IMR-90 (cell line): ENCODE measurements at regions of chr17 and their contacts with region 1.

Region 1: DNA sequence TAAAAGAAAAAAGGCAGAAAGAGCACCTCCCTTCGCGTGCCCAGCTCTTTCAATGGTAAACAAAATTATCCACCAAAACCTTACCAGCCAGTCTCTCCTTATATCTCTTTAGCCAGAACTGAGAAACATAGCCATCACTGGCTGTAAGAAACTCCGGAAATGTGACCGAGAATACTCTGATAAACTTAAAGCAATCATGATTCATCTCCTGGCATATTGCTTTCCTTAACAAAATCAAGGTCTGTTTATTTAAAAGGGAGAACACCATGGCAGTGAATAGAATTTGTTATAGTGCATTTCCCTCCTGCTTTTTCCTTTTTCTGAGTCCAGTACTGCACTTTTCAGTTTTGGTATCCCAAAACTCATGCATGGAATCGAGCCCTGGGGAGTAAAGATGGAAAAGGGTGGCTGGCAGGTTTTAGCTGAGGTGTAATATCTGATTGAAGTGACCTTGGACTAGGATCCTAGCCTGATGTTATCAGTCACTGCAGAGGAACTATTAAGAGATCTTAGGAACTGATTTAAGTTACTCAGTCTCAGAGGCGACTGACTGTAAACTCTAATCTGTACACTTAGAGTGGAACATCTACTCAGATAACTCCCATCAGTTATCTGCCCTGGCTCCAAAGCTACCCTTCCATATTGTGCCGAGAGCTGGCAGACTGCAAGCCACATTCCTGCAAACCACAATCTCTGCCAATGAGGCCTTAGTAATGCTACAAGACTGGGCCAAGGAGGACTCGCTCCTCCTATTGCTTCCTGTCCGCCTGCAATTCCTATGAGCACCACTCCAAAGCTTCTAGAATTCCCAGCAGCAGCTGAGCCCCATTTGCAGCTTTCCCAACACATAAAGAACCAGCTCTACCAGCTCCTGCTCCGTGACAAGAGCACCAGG is 7.4 kb upstream of the COX10 start:
- DNase-seq: peak; percentile 84
- ATAC-seq: peak; percentile 89
- H3K4me3 ChIP-seq: no peak overlapping the region; the same call in 1 of the 2 replicates
- H3K27ac ChIP-seq: peak overlapping the region; percentile 87
- H3K4me1 ChIP-seq: peaks cover 9% of the 10 kb centered on the region
- H3K27me3 ChIP-seq: no peaks in the 10 kb centered on the region
- CTCF ChIP-seq: 0 out of 2 replicates have a peak, but pooled peaks have one; percentile 9
- POLR2A ChIP-seq: no peak
- RAD21 ChIP-seq: no peak

Region 2: GRCh38 chr17:13337864-13338371 is 724.0 kb before region 1 on chr17:
- CTCF ChIA-PET with region 1: interaction called, 3 read pairs
- POLR2A ChIA-PET with region 1: no interaction called
- dilution Hi-C with region 1: no loop called
- in situ Hi-C with region 1: no loop called
- intact Hi-C with region 1: loop called (anchors 5 kb)
- DNase-seq: peak; percentile 78
- ATAC-seq: peak; percentile 84
- H3K4me3 ChIP-seq: peak overlapping the region; percentile 54
- H3K27ac ChIP-seq: no peak overlapping the region
- H3K4me1 ChIP-seq: peaks cover 5% of the 10 kb centered on the region
- H3K27me3 ChIP-seq: no peaks in the 10 kb centered on the region
- CTCF ChIP-seq: peak; percentile 92
- POLR2A ChIP-seq: peak; percentile 45; the same call in 1 of the 2 replicates
- RAD21 ChIP-seq: peak; percentile 93

Region 3: DNA sequence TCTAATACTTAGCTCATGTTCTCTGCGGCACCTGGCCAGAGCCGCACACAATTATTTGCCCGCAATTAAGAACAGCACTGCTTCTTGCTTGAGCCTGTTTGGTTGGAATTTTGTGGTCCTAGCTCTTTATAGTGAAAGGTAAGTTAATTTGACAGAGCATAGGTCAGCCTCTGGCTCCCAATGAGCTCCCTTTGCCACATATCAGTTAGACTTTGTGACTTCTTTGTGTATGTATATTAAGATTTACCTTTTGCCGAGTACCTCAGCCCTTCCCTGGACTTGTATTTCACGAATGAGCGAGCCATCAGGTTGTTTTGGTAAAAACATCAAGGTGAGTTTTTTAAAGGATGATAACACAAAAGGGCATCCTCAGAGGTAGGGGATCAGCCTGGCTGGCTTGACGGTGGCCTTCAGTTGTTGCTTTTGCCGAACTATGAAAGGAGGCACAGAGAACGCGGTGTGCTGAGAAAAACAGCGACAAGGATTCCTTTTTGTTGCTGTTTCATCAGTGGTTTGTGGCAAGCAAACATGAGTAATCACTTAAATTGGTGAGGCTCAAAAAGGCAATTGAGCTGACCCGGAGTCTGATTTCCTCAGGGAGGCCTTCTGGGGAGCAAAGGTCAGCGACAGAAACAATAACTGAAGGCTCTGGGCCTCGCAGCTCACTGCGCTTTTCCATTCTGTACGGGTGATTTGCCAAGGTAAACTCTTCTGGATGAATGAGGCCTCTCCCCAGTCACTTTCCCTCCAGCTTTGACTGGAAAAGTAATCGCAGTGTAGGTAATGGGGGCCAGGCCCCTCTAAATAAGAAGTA is 623.7 kb before region 1 on chr17:
- CTCF ChIA-PET with region 1: no interaction called
- POLR2A ChIA-PET with region 1: no interaction called
- dilution Hi-C with region 1: no loop called
- in situ Hi-C with region 1: no loop called
- intact Hi-C with region 1: no loop called
- DNase-seq: no peak
- ATAC-seq: no peak
- H3K4me3 ChIP-seq: no peak overlapping the region
- H3K27ac ChIP-seq: no peak overlapping the region
- H3K4me1 ChIP-seq: no peaks in the 10 kb centered on the region
- H3K27me3 ChIP-seq: no peaks in the 10 kb centered on the region
- CTCF ChIP-seq: no peak
- POLR2A ChIP-seq: no peak
- RAD21 ChIP-seq: no peak

Region 4: DNA sequence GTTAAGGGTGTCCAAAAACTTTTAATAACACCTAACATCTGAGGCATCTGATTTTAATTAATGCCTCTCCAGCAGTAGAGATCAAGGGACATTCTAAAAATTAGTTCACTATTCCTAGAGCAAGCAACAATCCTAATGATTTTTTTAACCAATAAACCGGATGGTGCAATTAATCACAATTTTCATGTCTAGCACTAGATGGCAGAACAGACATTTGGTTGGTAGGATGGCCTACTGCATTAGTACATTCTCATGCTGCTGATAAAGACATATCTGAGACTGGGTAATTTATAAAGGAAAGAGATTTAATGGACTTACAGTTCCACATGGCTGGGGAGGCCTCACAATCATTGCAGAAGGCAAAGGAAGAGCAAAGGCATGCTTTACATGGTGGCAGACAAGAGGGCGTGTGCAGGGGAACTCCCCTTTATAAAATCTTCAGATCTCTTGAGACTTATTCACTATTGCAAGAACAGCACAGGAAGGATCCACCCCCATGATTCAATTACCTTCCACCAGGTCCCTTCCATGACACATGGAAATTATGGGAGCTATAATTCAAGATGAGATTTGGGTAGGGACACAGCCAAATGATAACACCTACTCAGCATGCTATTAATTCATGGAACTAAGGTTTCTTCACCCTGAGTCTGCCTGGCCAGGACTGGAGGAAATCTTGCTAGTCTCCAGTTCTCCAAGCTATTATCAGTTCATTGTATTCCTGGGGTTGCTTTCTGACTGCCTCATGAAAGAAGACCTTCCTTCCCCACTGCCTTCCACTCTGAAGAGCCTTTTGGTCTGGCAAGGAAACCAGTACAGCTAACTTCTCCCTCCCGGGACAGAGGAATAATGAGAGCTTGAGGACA is 485.0 kb before region 1 on chr17:
- CTCF ChIA-PET with region 1: no interaction called
- POLR2A ChIA-PET with region 1: interaction called, 11 read pairs
- dilution Hi-C with region 1: no loop called
- in situ Hi-C with region 1: no loop called
- intact Hi-C with region 1: no loop called
- DNase-seq: no peak
- ATAC-seq: no peak
- H3K4me3 ChIP-seq: no peak overlapping the region
- H3K27ac ChIP-seq: no peak overlapping the region
- H3K4me1 ChIP-seq: peaks cover 8% of the 10 kb centered on the region
- H3K27me3 ChIP-seq: no peaks in the 10 kb centered on the region
- CTCF ChIP-seq: peak; percentile 16; the same call in 1 of the 2 replicates
- POLR2A ChIP-seq: no peak
- RAD21 ChIP-seq: peak; percentile 31

Region 5: DNA sequence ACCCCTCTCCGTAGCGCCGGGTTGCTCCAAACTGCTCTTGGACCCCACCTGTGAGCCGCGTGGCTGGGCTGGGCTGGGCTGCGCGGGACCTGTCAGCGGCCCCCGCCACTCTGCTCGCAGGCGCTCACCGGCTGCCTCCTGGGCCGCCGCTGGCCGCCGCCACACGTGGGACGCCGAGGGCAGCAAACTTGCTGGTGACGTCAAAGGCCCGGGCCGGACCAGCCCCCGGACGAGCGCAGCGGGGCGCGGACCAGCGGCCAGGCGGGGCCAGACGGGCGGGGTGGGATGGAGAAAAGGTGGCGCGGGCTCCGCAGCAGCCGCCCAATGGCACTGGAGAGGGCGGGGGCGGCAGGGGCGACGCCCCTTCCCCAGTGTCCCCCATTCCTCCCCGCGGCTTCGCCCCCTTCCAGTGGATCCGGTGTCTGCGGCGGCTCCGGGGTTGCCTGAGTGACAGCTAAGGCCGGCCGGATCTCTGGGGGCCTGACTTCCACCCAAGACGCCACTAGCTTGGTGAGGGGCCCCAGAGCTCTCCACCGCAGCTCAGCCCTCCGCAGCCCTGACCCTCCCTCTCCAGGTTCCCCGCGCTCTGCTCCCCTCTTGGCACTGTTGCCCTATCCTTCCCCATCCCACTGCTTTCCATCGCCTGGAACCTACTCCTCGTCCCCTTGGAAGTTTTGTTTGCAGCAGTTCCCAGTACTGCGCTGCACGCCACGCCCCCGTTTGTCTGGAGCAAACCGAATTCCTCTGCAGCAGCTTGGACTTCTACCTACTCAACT is 459.9 kb before region 1 on chr17 and contains the start of gene HS3ST3A1:
- CTCF ChIA-PET with region 1: interaction called, 4 read pairs
- POLR2A ChIA-PET with region 1: no interaction called
- dilution Hi-C with region 1: no loop called
- in situ Hi-C with region 1: no loop called
- intact Hi-C with region 1: loop called (anchors 2 kb)
- DNase-seq: peak; percentile 82
- ATAC-seq: peak; percentile 85
- H3K4me3 ChIP-seq: peak within 1 kb of the TSS; percentile 93
- H3K27ac ChIP-seq: peak within 1 kb of the TSS; percentile 98
- H3K4me1 ChIP-seq: no peaks in the 10 kb centered on the region
- H3K27me3 ChIP-seq: no peaks in the 10 kb centered on the region
- CTCF ChIP-seq: no peak
- POLR2A ChIP-seq: peak; percentile 73
- RAD21 ChIP-seq: peak; percentile 10; the same call in 1 of the 2 replicates
- total RNA-seq, gene HS3ST3A1: 7.5 and 9.0 TPM in 2 replicates

Region 6: DNA sequence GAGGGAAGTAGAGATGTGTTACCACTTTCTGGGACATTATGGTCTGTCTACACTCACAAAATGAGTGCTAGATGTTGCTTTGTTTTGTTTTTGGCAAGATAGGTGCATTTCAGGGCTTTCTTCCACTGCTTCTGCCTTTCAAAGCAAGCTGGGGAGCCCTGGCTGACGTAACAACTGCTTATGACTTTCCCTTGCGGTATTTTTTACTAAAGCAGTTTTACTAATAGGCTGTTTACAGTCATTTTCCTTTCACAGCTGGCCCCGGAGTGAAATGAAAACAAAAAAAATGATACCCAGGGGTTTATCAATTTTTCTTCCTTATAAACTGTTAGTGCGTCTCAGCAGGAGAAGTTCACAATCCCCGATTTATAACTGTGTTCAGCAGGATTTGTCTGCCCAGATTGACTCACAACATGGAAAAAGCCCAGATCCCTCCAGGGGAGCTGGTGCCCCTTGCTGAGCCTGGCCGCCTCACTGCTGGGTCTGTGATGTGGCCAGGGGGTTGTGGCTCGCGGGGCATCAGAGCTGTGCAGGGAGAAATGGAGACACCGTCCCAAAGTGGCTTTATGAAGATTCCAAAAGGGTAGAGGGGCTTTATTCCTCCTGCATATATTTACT is 275.8 kb before region 1 on chr17:
- CTCF ChIA-PET with region 1: no interaction called
- POLR2A ChIA-PET with region 1: no interaction called
- dilution Hi-C with region 1: no loop called
- in situ Hi-C with region 1: no loop called
- intact Hi-C with region 1: loop called (anchors 5 kb)
- DNase-seq: peak; percentile 76
- ATAC-seq: peak; percentile 86
- H3K4me3 ChIP-seq: no peak overlapping the region
- H3K27ac ChIP-seq: peak overlapping the region; percentile 18; the same call in 1 of the 2 replicates
- H3K4me1 ChIP-seq: peaks cover 7% of the 10 kb centered on the region
- H3K27me3 ChIP-seq: peaks cover 2% of the 10 kb centered on the region; the same call in 1 of the 2 replicates
- CTCF ChIP-seq: no peak
- POLR2A ChIP-seq: no peak
- RAD21 ChIP-seq: no peak

Region 7: GRCh38 chr17:13986855-13987254 is 75.1 kb before region 1 on chr17:
- CTCF ChIA-PET with region 1: no interaction called
- POLR2A ChIA-PET with region 1: no interaction called
- dilution Hi-C with region 1: no loop called
- in situ Hi-C with region 1: no loop called
- intact Hi-C with region 1: no loop called
- DNase-seq: no peak
- ATAC-seq: no peak
- H3K4me3 ChIP-seq: no peak overlapping the region
- H3K27ac ChIP-seq: no peak overlapping the region
- H3K4me1 ChIP-seq: no peaks in the 10 kb centered on the region
- H3K27me3 ChIP-seq: no peaks in the 10 kb centered on the region
- CTCF ChIP-seq: no peak
- POLR2A ChIP-seq: no peak
- RAD21 ChIP-seq: no peak

Region 8: GRCh38 chr17:14078027-14078426 is 16.1 kb after region 1 on chr17:
- CTCF ChIA-PET with region 1: no interaction called
- POLR2A ChIA-PET with region 1: no interaction called
- dilution Hi-C with region 1: no loop called
- in situ Hi-C with region 1: no loop called
- intact Hi-C with region 1: no loop called
- DNase-seq: no peak
- ATAC-seq: no peak
- H3K4me3 ChIP-seq: no peak overlapping the region
- H3K27ac ChIP-seq: no peak overlapping the region
- H3K4me1 ChIP-seq: no peaks in the 10 kb centered on the region
- H3K27me3 ChIP-seq: no peaks in the 10 kb centered on the region
- CTCF ChIP-seq: no peak
- POLR2A ChIP-seq: no peak
- RAD21 ChIP-seq: no peak